ENCODE measurements at regions of chr11 and their contacts with region 1.

Region 1: GRCh38 chr11:27281740-27282590 is 81.0 kb downstream of the CCDC34 start:
- DNase-seq: peak; percentile 99
- H3K4me3 ChIP-seq: no peak overlapping the region
- H3K27ac ChIP-seq: peak overlapping the region; percentile 56
- H3K4me1 ChIP-seq: peaks cover 23% of the 10 kb centered on the region
- H3K27me3 ChIP-seq: peaks cover 13 to 17% of the 10 kb centered on the region in 2 experiments
- CTCF ChIP-seq: no peak
- POLR2A ChIP-seq: peak; percentile 90

Region 2: DNA sequence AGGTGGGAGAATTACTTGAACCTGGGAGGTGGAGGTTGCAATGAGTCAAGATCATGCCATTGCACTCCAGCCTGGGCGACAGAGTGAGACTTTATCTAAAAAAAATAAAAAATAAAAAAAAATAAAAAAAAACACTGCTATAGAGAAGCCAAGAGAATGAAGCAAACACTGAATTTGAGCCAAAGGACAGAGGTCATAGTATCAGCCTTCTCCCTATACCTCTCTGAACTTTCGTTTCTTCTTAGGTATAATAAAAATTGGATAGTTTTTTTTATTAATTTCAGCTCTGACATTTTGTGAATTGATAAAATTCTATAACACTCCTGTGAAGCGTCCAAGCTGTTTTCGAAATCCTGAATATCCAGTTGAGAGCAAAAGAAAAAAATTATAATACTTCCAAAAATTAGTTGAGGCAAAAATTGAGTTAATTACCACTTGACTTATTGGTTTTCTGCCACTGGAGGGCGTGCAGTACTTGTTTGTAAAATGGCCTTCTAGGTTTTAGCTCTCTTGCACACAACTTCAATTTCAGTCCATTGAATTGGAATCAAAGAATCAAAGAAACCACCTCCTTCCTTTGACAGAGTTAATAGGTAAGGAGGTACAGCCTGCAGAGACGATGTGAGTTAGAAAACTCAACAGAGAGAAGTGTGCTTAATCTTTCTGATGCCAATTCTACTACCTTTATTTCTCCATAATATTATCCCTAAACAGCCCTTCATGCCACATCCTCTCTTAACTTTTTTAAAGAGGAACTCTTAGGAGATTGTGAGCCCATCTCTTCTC is 98.1 kb before region 1 on chr11:
- CTCF ChIA-PET with region 1: interaction called, 14 read pairs
- POLR2A ChIA-PET with region 1: no interaction called
- dilution Hi-C with region 1: no loop called
- intact Hi-C with region 1: no loop called
- DNase-seq: peak; percentile 66
- H3K4me3 ChIP-seq: no peak overlapping the region
- H3K27ac ChIP-seq: no peak overlapping the region
- H3K4me1 ChIP-seq: no peaks in the 10 kb centered on the region
- H3K27me3 ChIP-seq: peaks cover 18 to 20% of the 10 kb centered on the region in 2 experiments
- CTCF ChIP-seq: peak; percentile 37 to 46
- POLR2A ChIP-seq: no peak

Region 3: GRCh38 chr11:27209562-27210005 is 72.4 kb before region 1 on chr11:
- CTCF ChIA-PET with region 1: interaction called, 38 read pairs
- POLR2A ChIA-PET with region 1: interaction called, 4 read pairs
- dilution Hi-C with region 1: no loop called
- intact Hi-C with region 1: loop called (anchors 2 kb)
- DNase-seq: peak; percentile 64
- H3K4me3 ChIP-seq: no peak overlapping the region
- H3K27ac ChIP-seq: no peak overlapping the region
- H3K4me1 ChIP-seq: peaks cover 12% of the 10 kb centered on the region
- H3K27me3 ChIP-seq: peaks cover 68 to 71% of the 10 kb centered on the region in 2 experiments
- CTCF ChIP-seq: no peak
- POLR2A ChIP-seq: no peak

Region 4: DNA sequence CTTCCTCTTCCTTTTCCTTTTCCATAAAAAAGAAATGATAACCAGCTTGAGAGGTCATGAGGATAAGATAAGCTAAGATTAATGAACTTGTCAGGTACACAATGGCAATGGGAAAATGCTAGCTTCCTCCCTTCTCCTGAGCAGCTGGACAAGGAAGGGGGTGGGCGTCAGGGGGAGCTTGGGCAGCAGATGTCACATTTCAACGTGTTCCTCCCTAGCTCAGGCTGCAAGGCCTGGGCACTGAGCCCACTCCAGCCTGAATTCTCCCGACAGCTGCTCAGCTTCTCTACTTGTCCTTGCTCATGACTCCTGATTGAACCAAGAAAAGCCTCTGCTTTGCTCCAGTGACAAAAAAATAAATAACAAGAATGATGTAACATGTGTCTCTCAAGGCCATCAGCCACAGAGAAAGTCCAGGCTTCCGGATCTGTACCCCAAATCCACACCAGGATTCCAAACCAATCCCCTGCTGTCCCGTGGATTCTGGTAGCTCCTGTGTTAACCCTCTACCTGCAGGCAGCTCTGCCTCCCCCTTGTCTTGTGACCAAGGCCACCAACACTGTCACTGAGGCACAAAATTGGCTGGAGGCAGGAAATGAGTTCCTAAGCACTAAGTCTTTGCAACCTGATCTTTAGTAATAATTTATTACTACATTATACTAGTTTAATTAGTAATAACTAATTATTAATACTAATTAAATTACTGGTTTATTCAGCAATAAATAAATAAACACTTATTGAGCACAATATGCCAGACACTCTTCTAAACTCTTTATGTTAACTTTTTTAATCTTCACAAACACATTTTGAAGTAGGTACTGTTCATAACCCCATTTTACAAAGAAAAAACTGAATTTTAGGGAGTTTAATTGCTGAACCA is 65.5 kb before region 1 on chr11:
- CTCF ChIA-PET with region 1: interaction called, 38 read pairs
- POLR2A ChIA-PET with region 1: interaction called, 19 read pairs
- dilution Hi-C with region 1: no loop called
- intact Hi-C with region 1: loop called (anchors 2 kb)
- DNase-seq: peak; percentile 90
- H3K4me3 ChIP-seq: no peak overlapping the region
- H3K27ac ChIP-seq: no peak overlapping the region
- H3K4me1 ChIP-seq: peaks cover 23% of the 10 kb centered on the region
- H3K27me3 ChIP-seq: peaks cover 48% of the 10 kb centered on the region in 2 experiments
- CTCF ChIP-seq: no peak
- POLR2A ChIP-seq: peak; percentile 7

Region 5: DNA sequence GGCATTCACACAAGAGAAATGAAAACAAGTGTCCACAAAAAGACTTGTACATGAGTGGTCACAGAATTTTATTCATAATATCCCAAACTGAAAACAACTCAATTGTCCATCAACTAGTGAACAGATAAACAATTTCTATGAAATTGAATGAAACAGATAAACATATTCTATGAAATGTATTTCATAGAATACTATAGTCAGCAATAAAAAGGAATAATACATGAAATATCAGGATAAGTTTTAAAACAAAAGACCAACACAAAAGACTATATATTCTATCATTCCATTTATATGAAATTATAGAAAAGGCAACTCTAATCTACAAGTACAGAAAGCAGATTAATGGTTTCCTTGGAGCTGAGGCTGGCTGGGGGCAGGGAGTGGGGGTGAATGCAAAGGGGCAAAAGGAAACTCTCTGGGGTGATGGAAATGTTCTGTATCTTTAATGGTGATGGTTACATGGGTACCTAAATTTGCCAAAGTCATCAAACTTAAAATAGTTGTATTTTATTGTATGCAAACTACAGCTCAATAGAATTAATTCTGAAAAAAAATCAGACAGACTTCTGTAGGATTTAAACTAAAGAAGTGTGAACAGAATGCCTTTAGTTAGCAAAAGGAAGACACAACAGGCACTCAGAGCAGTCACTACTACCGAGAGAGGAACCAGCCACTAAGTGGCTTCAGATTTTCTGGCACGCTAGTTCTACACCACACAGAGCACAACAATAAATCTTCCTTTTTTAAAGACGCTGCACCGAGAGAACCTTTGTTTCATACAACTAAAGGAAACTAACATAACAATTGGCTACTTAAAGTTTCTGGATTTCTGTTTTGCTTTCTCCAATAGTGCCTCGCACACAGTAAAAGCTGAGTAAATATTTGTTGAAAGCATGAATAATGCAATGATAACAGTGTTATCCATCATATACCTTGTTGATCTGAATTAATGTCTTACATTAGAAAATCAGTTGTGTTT is 65.7 kb after region 1 on chr11:
- CTCF ChIA-PET with region 1: no interaction called
- POLR2A ChIA-PET with region 1: no interaction called
- dilution Hi-C with region 1: no loop called
- intact Hi-C with region 1: no loop called
- DNase-seq: no peak
- H3K4me3 ChIP-seq: no peak overlapping the region
- H3K27ac ChIP-seq: no peak overlapping the region
- H3K4me1 ChIP-seq: no peaks in the 10 kb centered on the region
- H3K27me3 ChIP-seq: no peaks in the 10 kb centered on the region
- CTCF ChIP-seq: no peak
- POLR2A ChIP-seq: no peak

Region 6: DNA sequence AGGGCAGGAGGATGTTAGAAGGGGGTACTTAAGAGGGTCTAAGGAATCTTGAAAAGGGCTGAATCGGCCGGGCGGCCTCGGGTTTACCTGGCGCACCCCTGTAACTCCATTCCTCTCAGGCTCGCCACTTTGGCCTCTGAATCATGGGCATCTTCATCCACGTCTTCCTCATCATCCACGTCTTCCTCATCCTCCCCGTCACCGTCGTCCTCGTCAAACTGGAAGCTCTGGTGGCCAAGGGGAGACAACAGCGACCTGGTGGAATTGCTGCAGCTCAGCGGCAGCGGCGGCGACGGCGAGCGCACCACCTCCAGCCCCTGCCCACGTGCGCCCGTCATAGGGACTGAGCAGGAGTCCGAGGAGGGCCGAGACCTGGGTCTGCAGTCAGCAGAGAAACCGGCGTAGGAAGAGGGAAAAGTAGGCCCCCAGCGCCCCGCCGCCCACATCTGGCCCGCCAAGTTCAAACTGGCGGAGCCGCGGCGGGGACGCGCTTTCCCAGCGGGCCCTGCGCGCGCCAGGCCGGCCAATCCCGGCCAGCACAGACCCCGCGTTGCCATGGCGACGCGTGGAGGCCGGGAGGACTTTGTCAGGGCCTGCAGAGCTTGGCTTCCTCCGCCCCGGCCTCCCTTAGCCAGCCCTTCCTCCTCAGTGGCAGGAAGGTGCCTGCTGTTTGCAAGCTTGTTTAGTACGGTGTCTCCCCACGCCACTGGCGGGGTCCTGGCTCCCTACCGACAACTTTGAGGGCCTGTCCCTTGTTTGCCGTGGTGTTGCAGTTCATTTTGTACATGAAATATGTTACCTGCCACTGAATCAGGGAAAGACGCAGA is 81.0 kb after region 1 on chr11 and contains the start of gene CCDC34:
- CTCF ChIA-PET with region 1: no interaction called
- POLR2A ChIA-PET with region 1: no interaction called
- dilution Hi-C with region 1: no loop called
- intact Hi-C with region 1: loop called (anchors 1 kb)
- DNase-seq: peak; percentile 90
- H3K4me3 ChIP-seq: peak within 1 kb of the TSS; percentile 50 to 93 (median 53)
- H3K27ac ChIP-seq: no peak within 1 kb of the TSS
- H3K4me1 ChIP-seq: peaks cover 8% of the 10 kb centered on the region
- H3K27me3 ChIP-seq: no peaks in the 10 kb centered on the region
- CTCF ChIP-seq: no peak
- POLR2A ChIP-seq: peak; percentile 77
- total RNA-seq, gene CCDC34: 11.4 and 11.8 TPM in 2 replicates

Region 7: DNA sequence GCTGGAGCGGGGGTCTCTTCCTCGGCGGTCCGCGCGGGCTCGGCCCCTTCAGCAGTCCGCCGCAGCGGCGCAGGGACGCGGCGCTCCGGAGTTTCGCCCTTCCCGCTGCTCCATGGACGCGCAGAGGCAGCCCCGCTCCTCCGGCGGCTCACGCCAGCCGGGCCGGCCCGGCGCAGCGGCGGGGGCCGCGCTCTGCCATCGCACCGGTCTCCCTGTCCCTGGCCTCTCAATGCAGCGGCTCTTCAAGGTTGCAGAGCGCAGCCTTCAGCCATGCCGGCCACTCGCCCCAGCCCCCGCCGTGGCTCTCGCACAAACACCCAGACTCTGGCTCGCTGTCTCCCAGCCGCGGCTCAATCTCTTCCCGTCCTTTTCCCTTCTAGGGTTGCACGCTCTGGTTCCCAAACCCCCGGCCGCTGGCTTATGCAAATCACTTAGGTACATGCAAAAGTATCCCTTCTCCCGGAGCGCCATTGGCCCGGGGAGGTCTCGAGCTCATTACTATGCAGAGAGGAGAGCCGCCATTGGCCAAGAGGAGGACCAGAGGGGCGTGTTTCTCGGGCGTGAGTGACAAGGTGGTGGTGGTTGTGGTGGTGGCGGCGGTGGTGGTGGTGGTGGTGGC is 190.5 kb after region 1 on chr11 and contains the start of gene LGR4:
- CTCF ChIA-PET with region 1: interaction called, 3 read pairs
- POLR2A ChIA-PET with region 1: interaction called, 4 read pairs
- dilution Hi-C with region 1: no loop called
- intact Hi-C with region 1: loop called (anchors 2 kb)
- DNase-seq: peak; percentile 96
- H3K4me3 ChIP-seq: peak within 1 kb of the TSS; percentile 44 to 94 (median 73)
- H3K27ac ChIP-seq: no peak within 1 kb of the TSS
- H3K4me1 ChIP-seq: peaks cover 14% of the 10 kb centered on the region
- H3K27me3 ChIP-seq: peaks cover 0 to 2% of the 10 kb centered on the region in 2 experiments
- CTCF ChIP-seq: no peak
- POLR2A ChIP-seq: peak; percentile 52
- total RNA-seq, gene LGR4: 2.6 and 3.1 TPM in 2 replicates